HEK293T (cell line): ENCODE measurements at regions of chr14 and their contacts with region 1.

Region 1: GRCh38 chr14:55354500-55354899 is 57.1 kb downstream of the ATG14 start:
- DNase-seq: peak; percentile 64

Region 2: GRCh38 chr14:55270832-55271565 is 83.5 kb before region 1 on chr14 and contains the start of gene FBXO34:
- CTCF ChIA-PET with region 1: interaction called, 22 read pairs
- POLR2A ChIA-PET with region 1: interaction called, 4 read pairs
- DNase-seq: peak; percentile 92

Region 3: GRCh38 chr14:55285048-55285652 is 69.3 kb before region 1 on chr14:
- CTCF ChIA-PET with region 1: interaction called, 17 read pairs
- POLR2A ChIA-PET with region 1: no interaction called
- DNase-seq: no peak

Region 4: DNA sequence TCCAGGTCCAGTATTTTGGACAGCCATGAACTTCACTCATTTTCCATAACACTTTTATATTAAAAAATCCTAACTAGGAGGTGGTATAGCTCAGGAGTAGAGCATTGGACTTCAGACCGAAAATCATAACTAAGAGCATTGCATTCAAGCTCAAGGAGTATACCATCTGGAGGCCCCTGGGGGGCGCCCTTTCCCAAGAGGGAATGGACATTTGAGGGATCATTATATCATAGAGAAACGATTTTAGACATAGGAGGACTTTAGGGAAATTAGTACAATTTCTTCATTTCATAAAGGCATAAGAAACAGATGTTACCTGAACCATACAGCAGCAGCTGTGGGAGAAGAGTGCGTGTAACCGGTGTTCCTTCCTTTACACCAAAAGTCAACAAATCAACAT is 62.4 kb after region 1 on chr14:
- CTCF ChIA-PET with region 1: no interaction called
- POLR2A ChIA-PET with region 1: no interaction called
- DNase-seq: peak; percentile 30